Activated T-helper 1 cell treated with anti-CD3 and anti-CD28 coated beads, Interleukin-12 subunit alpha, Interleukin-12 subunit beta, Interleukin-2, Interleukin-4 antibody, amounts not matched to agents 30 ng/mL and 10 ng/mL and 1 ng/mL, durations not matched to agents 14 hours and 24 hours and 36 hours (primary cell): ENCODE measurements at regions of chr9 and their contacts with region 1.

Region 1: GRCh38 chr9:96317335-96317980 is 15.5 kb upstream of the HSD17B3 start:
- DNase-seq: peak; percentile 6
- H3K4me3 Mint-ChIP-seq: no peak overlapping the region
- H3K27ac Mint-ChIP-seq: no peak overlapping the region
- H3K4me1 Mint-ChIP-seq: no peaks in the 10 kb centered on the region
- H3K27me3 Mint-ChIP-seq: peaks cover 3% of the 10 kb centered on the region

Region 2: DNA sequence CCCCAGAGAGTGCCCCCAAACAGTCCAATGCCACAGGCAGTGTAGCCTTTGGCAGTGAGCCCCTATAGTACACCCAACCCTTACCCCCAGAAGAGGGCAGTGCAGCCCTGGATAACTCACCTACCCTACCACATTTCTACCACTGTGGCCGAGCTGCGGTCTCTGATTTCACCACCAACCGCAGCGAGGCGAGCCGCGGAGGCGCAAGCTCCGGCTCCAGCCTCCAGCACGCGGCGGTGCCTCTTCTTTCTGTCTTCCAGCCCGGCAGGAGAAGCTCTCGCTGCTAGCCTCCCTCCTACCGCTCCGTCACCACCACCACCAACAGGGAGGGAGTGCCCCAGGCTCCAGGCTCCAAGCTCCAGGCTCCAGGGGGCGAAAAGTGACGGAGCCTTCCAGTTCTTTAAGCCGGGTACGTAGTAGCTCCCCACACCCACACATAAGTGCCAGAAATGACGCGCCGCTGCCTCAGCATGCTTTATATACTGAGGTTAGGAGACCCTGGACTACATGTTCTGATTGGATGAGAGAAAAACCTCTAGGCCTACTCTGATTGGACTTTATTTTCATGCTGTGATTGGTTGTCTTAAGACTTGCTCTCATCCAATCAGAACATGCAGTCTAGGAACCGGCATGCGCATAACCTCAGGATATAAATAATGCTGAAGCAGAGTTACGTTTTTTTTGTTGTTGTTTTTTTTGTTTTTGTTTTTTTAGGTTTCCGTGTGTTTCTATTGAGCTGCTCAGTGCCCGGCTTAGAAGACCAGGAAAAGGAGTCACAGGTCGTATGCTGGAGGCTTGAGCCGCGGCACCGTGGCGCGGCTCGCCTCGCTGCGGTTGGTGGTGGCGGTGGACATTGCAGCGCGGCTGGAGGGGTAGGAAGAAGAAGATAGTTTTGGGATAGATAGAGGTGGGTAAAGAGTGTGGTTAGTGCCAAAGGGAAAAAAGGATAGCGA is 1762.7 kb before region 1 on chr9 and contains the start of gene PCAT7:
- intact Hi-C with region 1: no loop called
- DNase-seq: no peak
- H3K4me3 Mint-ChIP-seq: no peak within 1 kb of the TSS
- H3K27ac Mint-ChIP-seq: no peak within 1 kb of the TSS
- H3K4me1 Mint-ChIP-seq: no peaks in the 10 kb centered on the region
- H3K27me3 Mint-ChIP-seq: peaks cover 9% of the 10 kb centered on the region
- total RNA-seq, gene PCAT7: not detected in 2 replicates

Region 3: GRCh38 chr9:95753762-95754465 is 563.5 kb before region 1 on chr9:
- intact Hi-C with region 1: loop called (anchors 5 kb)
- DNase-seq: no peak
- H3K4me3 Mint-ChIP-seq: no peak overlapping the region
- H3K27ac Mint-ChIP-seq: no peak overlapping the region
- H3K4me1 Mint-ChIP-seq: peaks cover 17% of the 10 kb centered on the region
- H3K27me3 Mint-ChIP-seq: peaks cover 31% of the 10 kb centered on the region

Region 4: DNA sequence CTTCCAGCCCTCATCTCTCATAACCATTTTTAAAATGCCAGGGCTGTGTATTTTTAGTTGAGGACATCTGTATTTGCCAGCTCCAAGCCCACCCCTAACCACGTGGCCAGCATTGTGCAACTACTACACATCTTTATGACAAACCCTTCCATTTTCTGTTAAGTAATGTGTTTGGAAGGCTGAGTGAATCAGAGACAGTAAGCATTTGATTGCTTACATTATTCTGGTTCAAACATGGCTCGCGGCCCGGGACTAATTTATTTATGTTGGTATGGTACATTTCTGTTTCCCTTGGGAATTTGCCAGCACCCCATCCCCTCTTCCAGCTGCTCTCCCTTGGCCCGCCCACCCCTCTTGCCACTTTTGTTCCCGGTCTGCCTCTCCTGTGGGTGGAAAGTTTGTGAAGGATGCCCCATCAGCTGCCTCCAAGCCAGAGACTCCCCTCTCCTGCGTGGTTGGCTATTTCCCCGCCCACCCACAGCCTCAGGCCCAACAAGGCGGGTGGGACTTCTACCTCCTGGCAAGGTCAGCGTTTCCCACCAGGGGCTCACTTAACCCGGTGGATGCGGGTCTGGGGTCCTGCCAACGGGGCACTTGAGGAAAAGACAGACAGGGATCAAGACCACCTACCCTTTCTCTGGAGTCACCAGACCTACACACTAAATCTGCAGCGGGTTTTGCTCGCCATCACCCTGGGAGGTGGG is 177.7 kb before region 1 on chr9:
- intact Hi-C with region 1: loop called (anchors 5 kb)
- DNase-seq: no peak
- H3K4me3 Mint-ChIP-seq: no peak overlapping the region
- H3K27ac Mint-ChIP-seq: no peak overlapping the region
- H3K4me1 Mint-ChIP-seq: peaks cover 15% of the 10 kb centered on the region
- H3K27me3 Mint-ChIP-seq: peaks cover 4% of the 10 kb centered on the region

Region 5: DNA sequence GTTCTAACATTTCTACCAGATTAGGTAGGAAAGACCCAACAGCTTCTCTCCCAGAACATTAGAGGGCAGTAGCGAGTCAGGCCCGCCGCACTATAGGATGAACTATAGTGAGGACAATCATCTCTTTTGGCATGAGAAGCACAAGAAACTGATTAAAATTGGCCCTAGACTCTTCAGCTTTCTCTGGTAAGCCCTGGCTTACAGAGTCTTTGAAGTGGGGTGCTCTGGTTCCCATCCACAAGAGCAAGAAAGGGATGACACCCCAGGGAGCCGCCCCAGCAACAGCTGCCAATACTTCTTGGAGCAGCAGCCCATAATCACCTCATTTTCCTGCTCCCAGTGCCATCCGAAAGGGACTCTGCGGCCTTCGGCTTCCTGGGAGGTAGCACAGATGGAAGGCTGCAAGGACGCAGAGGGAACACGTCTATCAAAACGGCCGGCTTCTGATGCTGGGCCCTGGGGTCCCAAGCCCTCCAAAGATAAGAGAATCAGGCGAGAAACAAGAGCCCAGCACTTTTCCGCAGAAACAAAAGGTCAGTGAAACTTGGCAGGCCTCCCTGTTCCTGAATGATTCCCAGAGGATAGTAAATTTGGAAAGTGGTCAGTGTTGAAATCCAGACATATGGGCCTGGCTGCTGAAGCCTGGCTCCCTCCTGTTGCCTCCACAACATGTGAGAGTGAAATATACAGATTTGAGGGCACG is 84.8 kb before region 1 on chr9:
- intact Hi-C with region 1: loop called (anchors 1 kb)
- DNase-seq: no peak
- H3K4me3 Mint-ChIP-seq: no peak overlapping the region
- H3K27ac Mint-ChIP-seq: no peak overlapping the region
- H3K4me1 Mint-ChIP-seq: no peaks in the 10 kb centered on the region
- H3K27me3 Mint-ChIP-seq: peaks cover 44% of the 10 kb centered on the region